ENCODE measurements at regions of chr7 and their contacts with region 1.

Region 1: GRCh38 chr7:141975806-141976523 is 2.4 kb upstream of the TAS2R38 start:
- DNase-seq: peak; percentile 78
- ATAC-seq: peak; percentile 59 to 81

Region 2: GRCh38 chr7:141575164-141575563 is 400.8 kb before region 1 on chr7:
- intact Hi-C with region 1: no loop called
- DNase-seq: no peak
- ATAC-seq: no peak

Region 3: DNA sequence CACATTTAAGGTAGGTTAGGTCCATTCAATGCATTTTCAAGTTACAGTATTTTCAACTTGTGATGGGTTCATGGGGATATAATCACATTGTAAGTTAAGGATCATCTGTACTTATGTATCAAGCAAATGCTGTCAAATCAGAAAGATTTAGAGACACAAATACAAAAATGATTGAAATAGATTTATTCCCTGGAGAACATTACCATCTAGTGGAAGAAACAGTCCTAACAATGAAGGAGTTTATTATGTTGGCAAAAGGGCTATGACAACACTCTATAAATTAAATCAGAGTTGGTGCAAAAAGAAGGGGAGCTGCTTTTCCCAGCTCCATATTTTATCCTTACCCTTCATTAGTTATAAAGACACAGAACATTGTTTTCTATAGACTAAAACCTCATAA is 212.9 kb after region 1 on chr7:
- intact Hi-C with region 1: loop called (anchors 5 to 10 kb)
- DNase-seq: no peak
- ATAC-seq: no peak

Measured in left cardiac atrium (tissue), 4 donors.